ENCODE measurements at regions of chr14 and their contacts with region 1.

Region 1: GRCh38 chr14:61025251-61026223 is 44.5 kb downstream of the SLC38A6 start:
- DNase-seq: no peak
- H3K4me3 ChIP-seq: no peak overlapping the region
- CTCF ChIP-seq: peak; percentile 70

Region 2: DNA sequence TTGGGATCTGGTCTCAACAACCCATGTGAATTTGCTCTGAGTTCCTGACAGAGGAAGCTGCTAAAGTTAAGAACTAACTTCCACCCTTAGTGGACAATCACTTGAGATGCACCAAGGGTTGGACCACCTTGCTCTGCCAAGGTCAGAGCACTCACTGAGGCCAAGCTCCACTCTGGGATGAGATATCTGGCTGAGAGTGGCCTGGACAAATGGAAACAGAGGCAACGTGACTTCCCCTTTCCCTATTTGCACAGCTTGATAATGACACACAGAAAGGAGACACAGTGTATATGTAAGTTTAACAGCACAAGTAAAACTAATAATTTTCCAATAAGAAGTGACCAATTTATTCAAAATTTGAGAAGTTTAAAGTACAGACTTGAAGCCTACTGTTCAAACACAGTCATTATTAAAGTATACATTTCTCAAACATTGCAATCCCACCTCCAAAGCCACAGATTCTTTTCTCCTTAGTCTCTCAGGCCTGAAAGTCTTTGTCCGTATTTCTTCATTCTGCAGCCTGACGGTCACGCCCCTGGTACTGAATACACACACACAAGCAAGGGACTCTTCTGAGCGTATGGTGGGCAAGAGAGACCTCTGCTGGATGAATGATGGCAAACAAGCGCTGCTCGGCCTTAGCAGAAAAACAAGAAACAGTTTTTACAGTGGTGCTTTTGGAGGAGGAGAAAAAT is 227.0 kb after region 1 on chr14:
- CTCF ChIA-PET with region 1: interaction called, 27 read pairs
- POLR2A ChIA-PET with region 1: no interaction called
- DNase-seq: peak; percentile 95
- H3K4me3 ChIP-seq: no peak overlapping the region
- CTCF ChIP-seq: peak; percentile 73